Sciatic nerve (tissue), 2 donors: ENCODE measurements at regions of chr17 and their contacts with region 1.

Region 1: DNA sequence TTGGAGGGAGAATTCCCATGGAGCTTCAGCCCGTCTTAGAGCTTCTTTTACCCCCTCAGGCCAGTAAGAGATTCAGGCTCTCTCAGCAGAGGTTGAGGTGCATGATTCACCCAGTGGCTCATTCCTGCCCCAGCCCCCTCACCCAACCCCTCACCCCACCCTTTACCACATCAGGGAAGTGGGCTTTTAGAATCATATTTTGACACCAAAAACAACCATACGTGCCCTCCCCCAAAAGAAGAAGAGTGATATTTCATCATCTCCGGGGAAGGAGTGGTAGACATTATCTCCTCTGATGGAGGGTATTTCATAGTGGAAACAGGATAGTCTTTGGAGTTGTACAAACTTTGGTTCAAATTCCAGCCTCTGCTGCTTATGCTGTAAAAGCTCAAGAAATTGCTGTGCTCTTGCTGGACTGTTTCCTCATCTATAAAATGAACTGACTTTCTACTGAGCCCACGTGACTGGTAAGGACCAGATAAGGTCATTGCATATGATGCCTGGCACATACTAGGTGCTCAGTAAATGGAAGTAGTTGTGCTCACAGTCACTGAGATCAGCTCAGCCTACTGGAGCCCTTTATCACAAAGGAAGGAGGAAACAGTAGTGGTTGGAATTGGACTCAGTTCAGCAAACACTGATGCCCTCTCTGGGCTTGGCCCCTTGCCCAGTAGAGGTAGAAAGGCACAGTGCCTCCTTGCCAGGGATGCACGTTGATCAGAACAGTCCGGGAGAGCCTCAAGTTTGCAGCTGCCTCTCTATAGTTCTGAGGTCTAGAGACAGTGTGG is 18.3 kb upstream of the CCL5 start:
- DNase-seq: no peak
- ATAC-seq: no peak

Region 2: DNA sequence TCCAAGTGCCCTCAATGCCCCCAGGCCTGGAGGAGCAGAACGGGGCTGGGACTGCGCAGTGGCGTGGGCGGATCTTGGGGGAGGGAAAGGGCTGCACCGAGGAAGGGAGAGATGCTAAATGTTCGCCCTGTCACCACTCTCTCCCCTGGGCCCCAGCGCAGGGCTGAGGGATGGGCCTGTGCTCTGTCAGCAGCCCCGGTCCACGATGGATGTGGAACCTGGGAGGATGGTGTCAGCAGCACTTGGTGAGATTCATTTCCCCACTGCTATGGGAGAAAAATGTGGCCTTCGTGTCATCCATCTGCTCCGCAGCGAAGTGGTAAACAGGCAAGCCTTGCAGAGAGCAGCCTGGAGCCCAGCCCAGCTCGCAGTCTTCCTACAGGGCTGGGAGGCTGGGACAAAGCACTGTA is 1247.1 kb before region 1 on chr17:
- intact Hi-C with region 1: loop called (anchors 5 kb)
- DNase-seq: no peak
- ATAC-seq: no peak

Region 3: GRCh38 chr17:35373534-35373983 is 524.9 kb before region 1 on chr17 and contains the start of gene SLFN11:
- intact Hi-C with region 1: no loop called
- DNase-seq: peak; percentile 95
- ATAC-seq: peak; percentile 98
- total RNA-seq, gene SLFN11: 107 TPM